HepG2 (cell line): ENCODE measurements at regions of chr11 and their contacts with region 1.

Region 1: DNA sequence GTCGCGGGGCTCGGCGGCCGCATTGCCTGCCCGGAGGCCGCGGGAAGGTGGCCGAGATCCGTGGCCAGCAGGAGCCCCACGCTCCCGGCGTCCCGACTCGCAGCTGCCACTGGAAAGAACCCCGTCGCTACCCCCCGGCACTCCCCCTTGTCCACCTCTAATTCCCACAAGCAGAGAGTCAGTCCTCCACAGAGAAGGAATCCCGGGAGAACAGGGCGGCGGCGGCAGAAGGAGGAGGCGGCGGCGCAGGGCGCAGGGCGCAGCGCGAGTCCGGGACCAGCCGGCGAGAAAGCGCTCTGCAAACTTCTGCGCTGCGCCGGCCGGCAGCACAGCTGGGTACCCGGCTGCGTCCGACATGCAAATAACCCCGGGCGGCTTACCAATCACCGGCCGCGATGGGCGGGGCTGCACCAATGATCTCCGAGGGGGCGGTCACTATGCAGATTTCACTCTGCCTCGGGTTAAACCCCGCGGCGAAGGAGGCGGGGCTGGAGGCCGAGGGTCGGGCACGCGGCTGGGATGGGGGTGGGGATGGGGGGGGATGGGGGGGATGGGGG is at the start of gene ABTB2:
- DNase-seq: peak; percentile 94
- ATAC-seq: peak; percentile 84
- H3K4me3 ChIP-seq: peak within 1 kb of the TSS; percentile 76 to 93 (median 91)
- H3K27ac ChIP-seq: peak within 1 kb of the TSS; percentile 83
- H3K4me1 ChIP-seq: peaks cover 55% of the 10 kb centered on the region
- H3K27me3 ChIP-seq: no peaks in the 10 kb centered on the region; a peak in 1 of 5 replicates
- CTCF ChIP-seq: no peak
- EP300 ChIP-seq: no peak
- POLR2A ChIP-seq: peak; percentile 90 to 95
- RAD21 ChIP-seq: no peak; the same call in 1 of the 2 replicates
- total RNA-seq, gene ABTB2: 5.1 TPM in 2 replicates

Region 2: DNA sequence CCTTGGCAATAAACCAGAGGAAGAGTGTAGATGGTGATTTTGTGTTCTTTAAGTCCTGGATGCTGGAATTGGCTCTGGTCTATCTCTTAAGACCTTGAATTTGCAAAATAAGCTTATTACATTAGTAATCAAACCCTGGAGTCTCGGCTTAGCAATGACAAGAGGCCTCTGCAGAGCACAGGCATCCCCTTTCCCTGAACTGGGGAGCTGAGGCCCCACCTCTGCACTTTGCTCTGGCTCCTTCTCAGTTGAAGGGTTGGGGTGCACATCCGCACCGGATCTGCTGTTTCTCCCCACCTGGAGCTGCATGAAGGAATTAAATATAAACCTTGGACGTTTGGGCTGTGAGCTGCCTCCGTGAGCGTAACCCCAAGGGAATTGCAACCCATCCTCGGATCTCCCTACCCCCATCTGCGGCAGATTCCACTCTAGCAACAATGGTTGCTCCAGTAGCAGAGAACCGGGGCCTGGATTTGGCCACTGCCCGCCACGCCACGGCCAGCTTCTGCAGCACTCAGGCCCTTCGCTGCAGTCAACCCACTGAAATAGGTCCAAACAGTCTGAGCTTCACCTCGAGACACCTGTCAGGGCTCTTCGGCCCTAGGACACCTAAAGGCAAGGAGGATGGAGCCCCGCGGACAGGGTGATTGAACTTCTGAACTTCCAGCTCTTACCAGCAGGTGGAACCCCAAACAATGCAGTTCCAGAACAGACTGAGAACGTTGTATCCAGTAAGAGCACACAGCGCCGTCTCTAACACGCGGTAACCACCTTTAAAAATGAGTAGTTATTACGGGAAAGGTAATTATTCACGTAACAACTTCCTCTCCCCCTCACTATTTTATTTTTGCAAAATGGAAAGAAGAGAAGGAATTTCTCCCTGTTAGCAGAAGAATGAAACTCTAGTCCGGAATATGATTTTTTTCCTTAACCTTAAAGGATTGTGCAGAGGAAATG is 361.0 kb before region 1 on chr11:
- CTCF ChIA-PET with region 1: interaction called, 10 read pairs
- POLR2A ChIA-PET with region 1: no interaction called
- in situ Hi-C with region 1: loop called (anchors 5 kb)
- intact Hi-C with region 1: loop called (anchors 2 kb)
- DNase-seq: peak; percentile 62
- ATAC-seq: peak; percentile 98
- H3K4me3 ChIP-seq: peak overlapping the region in 2 of 3 experiments; percentile 6 to 66; a peak in 4 of 6 replicates
- H3K27ac ChIP-seq: no peak overlapping the region
- H3K4me1 ChIP-seq: peaks cover 18% of the 10 kb centered on the region
- H3K27me3 ChIP-seq: peaks cover 0 to 12% of the 10 kb centered on the region in 2 experiments; a peak in 2 of 5 replicates
- CTCF ChIP-seq: peak; percentile 91
- EP300 ChIP-seq: no peak
- POLR2A ChIP-seq: no peak
- RAD21 ChIP-seq: peak; percentile 60; the same call in 1 of the 2 replicates

Region 3: DNA sequence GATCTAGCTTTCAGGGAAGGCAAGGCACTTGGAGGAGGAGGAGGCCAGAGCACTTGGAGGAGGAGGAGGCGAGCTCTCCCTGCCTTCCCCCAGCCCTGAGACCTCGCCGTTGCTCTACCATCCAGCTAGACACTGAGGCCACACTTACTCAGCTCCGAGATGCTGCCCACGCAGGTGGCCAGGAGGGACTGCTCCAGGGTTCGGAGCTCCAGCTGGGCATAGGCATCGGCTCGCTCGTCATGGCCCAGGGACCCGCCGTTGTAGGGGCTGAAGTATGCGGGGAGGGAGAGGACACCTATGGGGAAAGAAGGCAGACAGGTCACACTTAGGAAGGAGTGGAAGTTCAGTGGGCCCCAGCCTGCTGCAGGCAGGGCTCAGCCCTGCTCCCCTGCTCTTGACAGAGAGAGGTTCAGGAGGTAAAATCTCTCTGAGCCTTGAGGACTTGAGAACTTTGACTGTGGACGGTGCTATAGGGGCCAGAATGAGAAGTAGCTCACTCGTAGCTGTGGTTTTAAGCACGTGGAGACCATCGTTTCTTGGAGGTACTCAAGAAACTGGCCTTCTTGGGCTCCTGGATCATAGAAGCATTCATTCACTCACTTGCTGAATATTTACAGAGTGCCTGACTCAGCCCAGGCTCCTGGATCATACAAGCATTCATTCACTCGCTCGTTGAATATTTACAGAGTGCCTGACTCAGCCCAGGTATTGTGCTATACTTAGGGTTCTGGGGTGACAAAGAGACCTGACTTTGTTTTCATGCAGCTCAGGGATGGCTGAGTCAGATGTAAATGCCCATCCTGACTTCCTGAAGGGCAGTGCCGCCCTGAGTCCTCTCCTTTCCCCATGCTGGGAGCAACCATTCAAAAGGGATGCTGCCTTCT is 153.1 kb before region 1 on chr11:
- CTCF ChIA-PET with region 1: interaction called, 4 read pairs
- POLR2A ChIA-PET with region 1: interaction called, 8 read pairs
- in situ Hi-C with region 1: no loop called
- intact Hi-C with region 1: loop called (anchors 1 kb)
- DNase-seq: peak; percentile 89
- ATAC-seq: peak; percentile 92
- H3K4me3 ChIP-seq: no peak overlapping the region
- H3K27ac ChIP-seq: peak overlapping the region; percentile 45
- H3K4me1 ChIP-seq: peaks cover 67% of the 10 kb centered on the region
- H3K27me3 ChIP-seq: no peaks in the 10 kb centered on the region
- CTCF ChIP-seq: no peak
- EP300 ChIP-seq: no peak; a peak in 1 of 4 replicates
- POLR2A ChIP-seq: no peak
- RAD21 ChIP-seq: no peak

Region 4: DNA sequence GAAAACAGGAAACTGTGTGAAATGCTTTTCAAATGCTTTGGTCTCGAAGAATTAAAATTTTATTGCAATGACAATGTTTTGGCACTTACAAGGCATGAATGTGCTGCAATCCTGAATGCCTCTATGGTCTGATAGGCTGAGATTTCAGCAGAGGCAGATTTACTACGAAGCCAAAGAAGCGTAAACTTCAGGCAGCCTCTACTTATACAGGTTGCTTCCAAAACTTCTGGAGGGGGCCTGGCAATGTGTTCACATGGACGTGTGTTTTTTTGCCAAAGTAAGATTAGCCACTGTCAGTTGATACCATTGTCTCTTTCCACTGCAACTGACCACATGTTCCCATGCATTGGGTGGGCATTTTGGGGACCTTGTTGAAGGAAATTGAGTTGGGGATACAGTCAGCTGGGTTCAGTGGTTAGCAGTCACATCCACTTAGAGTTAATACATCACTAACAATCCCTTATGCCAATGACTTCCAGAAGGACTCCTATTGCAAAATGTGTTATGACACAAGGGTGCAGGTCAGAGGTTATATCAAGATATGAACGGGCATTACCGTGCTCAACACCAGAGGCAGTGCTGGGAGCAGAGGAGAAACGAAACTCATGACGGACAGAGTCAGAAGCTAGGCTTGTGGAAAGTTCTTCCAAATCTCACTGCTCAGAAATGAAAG is 48.7 kb before region 1 on chr11:
- CTCF ChIA-PET with region 1: no interaction called
- POLR2A ChIA-PET with region 1: interaction called, 13 read pairs
- in situ Hi-C with region 1: no loop called
- intact Hi-C with region 1: no loop called
- DNase-seq: peak; percentile 86
- ATAC-seq: peak; percentile 96
- H3K4me3 ChIP-seq: peak overlapping the region in 2 of 3 experiments; percentile 0 to 34; a peak in 2 of 6 replicates
- H3K27ac ChIP-seq: peak overlapping the region; percentile 31
- H3K4me1 ChIP-seq: peaks cover 25% of the 10 kb centered on the region
- H3K27me3 ChIP-seq: no peaks in the 10 kb centered on the region
- CTCF ChIP-seq: peak; percentile 35; the same call in 1 of the 2 replicates
- EP300 ChIP-seq: peak in 1 of 2 experiments; percentile 70; a peak in 2 of 4 replicates
- POLR2A ChIP-seq: no peak
- RAD21 ChIP-seq: peak; percentile 41; the same call in 1 of the 2 replicates

Region 5: GRCh38 chr11:34344768-34345539 is 12.8 kb before region 1 on chr11:
- CTCF ChIA-PET with region 1: interaction called, 9 read pairs
- POLR2A ChIA-PET with region 1: interaction called, 81 read pairs
- in situ Hi-C with region 1: no loop called
- intact Hi-C with region 1: no loop called
- DNase-seq: peak; percentile 95
- ATAC-seq: peak; percentile 88
- H3K4me3 ChIP-seq: peak overlapping the region in 1 of 3 experiments; percentile 38; a peak in 2 of 6 replicates
- H3K27ac ChIP-seq: peak overlapping the region; percentile 66
- H3K4me1 ChIP-seq: peaks cover 99% of the 10 kb centered on the region
- H3K27me3 ChIP-seq: no peaks in the 10 kb centered on the region
- CTCF ChIP-seq: no peak
- EP300 ChIP-seq: peak; percentile 69 to 94; a peak in 3 of 4 replicates
- POLR2A ChIP-seq: no peak
- RAD21 ChIP-seq: no peak

Region 6: GRCh38 chr11:35391922-35392813 is 1034.4 kb after region 1 on chr11:
- CTCF ChIA-PET with region 1: no interaction called
- POLR2A ChIA-PET with region 1: no interaction called
- in situ Hi-C with region 1: loop called (anchors 25 kb)
- intact Hi-C with region 1: no loop called
- DNase-seq: peak; percentile 60
- ATAC-seq: peak; percentile 88
- H3K4me3 ChIP-seq: peak overlapping the region in 2 of 3 experiments; percentile 32 to 34; a peak in 3 of 6 replicates
- H3K27ac ChIP-seq: no peak overlapping the region
- H3K4me1 ChIP-seq: peaks cover 30% of the 10 kb centered on the region
- H3K27me3 ChIP-seq: 0 out of 5 replicates have a peak, but pooled peaks cover 2 to 6% of the 10 kb centered on the region in 2 experiments
- CTCF ChIP-seq: peak; percentile 95
- EP300 ChIP-seq: no peak
- POLR2A ChIP-seq: no peak
- RAD21 ChIP-seq: peak; percentile 91